ENCODE measurements at regions of chr16 and their contacts with region 1.

Region 1: DNA sequence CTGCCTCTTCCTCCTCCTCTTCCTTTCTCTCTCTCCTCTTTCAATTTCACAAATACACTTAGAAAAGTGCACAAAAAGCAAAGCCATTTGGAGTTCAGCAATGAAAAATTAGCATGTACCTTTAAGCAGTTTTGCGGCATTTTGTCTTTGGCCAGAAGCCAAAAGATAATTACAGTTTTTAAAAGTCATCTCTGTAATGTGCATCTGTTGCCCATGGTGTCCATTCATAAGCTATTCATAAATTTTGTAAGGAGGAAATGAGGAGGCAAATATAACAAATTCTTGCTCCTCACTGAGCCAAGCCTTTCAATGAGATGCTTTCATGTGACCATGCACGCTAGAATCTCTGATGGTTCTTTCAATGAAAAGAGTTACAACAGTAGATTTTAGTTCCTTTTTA is 247.1 kb upstream of the MON1B start:
- DNase-seq: no peak
- ATAC-seq: no peak
- H3K4me3 ChIP-seq: no peak overlapping the region
- H3K27ac ChIP-seq: no peak overlapping the region
- H3K4me1 ChIP-seq: no peaks in the 10 kb centered on the region
- H3K27me3 ChIP-seq: no peaks in the 10 kb centered on the region

Region 2: DNA sequence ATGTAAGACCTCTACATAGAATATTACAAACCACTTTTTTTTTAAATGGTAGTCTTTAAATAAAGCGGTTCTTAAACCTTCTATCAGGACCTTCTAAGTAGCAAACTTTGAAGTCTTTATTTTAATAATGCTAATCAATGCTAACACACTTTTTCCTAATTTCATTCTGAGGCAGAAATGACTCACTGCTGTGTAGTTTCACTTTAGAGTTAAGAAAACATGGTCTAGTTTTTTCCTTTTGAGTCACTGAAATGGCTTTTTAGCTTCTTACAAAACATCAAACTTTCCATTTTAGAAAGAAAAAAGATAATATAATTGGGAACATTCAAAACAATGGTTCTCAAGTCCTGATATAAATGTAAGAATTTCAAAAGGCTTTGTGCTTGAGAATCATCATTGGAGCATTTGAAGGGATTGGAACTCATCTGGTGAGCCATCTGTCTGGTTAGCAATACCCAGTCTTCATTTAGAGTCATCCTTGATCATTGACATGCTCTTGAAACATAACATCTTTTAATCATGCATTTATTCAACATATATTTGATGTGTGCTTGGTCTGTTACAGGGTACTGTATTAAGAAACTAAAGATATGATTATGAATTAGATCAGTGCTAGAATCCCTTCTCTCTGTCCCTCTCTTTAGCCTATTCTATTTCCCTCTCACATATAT is 11.2 kb before region 1 on chr16:
- intact Hi-C with region 1: loop called in 1 of 2 experiments (anchors 1 kb)
- DNase-seq: no peak
- ATAC-seq: no peak
- H3K4me3 ChIP-seq: no peak overlapping the region
- H3K27ac ChIP-seq: no peak overlapping the region
- H3K4me1 ChIP-seq: no peaks in the 10 kb centered on the region
- H3K27me3 ChIP-seq: no peaks in the 10 kb centered on the region